ENCODE measurements at regions of chrX and their contacts with region 1.

Region 1: GRCh38 chrX:15854712-15855567 is at the start of gene AP1S2:
- DNase-seq: peak; percentile 88
- ATAC-seq: peak; percentile 90
- H3K4me3 Mint-ChIP-seq: peak within 1 kb of the TSS; percentile 91
- H3K27ac Mint-ChIP-seq: peak within 1 kb of the TSS; percentile 98
- H3K4me1 Mint-ChIP-seq: peaks cover 31% of the 10 kb centered on the region
- H3K27me3 Mint-ChIP-seq: no peaks in the 10 kb centered on the region
- CTCF ChIP-seq: no peak
- total RNA-seq, gene AP1S2: 42.3 and 45.9 TPM in 2 replicates

Region 2: DNA sequence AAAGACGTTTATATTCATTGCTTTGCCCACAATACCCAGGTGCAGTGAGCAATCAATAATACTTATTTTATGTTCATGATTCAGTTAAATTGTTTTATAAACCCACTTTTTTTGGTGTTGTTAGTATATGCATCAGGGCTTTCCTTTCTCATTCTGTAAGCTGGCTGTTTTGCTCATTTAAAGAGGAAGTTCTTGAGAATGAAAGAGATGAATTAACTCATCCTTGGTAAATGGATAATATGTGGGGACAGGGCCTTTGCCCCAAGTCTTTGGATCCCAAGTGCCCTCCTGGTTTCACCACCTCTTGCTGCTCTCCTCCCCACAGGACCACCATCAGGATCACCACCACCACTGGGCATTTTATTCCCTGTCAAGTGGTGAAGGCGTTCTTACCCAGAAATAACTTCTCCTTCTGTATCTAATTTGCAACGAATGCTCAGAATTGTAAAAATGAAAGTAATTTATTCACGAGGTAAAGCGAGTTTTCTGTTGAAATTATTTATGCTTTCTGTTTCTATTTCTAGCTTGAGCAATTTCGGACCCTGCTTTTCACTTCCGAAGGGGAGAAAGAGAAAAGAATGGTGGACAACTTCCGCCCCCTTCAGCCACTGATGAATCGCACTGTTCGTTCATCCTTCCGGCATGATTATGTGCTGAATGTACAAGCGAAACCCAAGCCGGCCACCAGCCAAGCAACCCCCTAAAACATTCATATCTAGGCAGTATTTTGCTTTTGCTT is 72.8 kb before region 1 on chrX:
- CTCF ChIA-PET with region 1: no interaction called
- POLR2A ChIA-PET with region 1: interaction called, 12 read pairs
- intact Hi-C with region 1: no loop called
- DNase-seq: no peak
- ATAC-seq: peak; percentile 81
- H3K4me3 Mint-ChIP-seq: peak overlapping the region; percentile 83
- H3K27ac Mint-ChIP-seq: peak overlapping the region; percentile 98
- H3K4me1 Mint-ChIP-seq: peaks cover 16% of the 10 kb centered on the region
- H3K27me3 Mint-ChIP-seq: no peaks in the 10 kb centered on the region
- CTCF ChIP-seq: no peak

Region 3: GRCh38 chrX:15815779-15816437 is 39.0 kb before region 1 on chrX:
- CTCF ChIA-PET with region 1: no interaction called
- POLR2A ChIA-PET with region 1: no interaction called
- intact Hi-C with region 1: no loop called
- DNase-seq: no peak
- ATAC-seq: peak; percentile 65
- H3K4me3 Mint-ChIP-seq: no peak overlapping the region
- H3K27ac Mint-ChIP-seq: no peak overlapping the region
- H3K4me1 Mint-ChIP-seq: no peaks in the 10 kb centered on the region
- H3K27me3 Mint-ChIP-seq: no peaks in the 10 kb centered on the region
- CTCF ChIP-seq: no peak

Region 4: DNA sequence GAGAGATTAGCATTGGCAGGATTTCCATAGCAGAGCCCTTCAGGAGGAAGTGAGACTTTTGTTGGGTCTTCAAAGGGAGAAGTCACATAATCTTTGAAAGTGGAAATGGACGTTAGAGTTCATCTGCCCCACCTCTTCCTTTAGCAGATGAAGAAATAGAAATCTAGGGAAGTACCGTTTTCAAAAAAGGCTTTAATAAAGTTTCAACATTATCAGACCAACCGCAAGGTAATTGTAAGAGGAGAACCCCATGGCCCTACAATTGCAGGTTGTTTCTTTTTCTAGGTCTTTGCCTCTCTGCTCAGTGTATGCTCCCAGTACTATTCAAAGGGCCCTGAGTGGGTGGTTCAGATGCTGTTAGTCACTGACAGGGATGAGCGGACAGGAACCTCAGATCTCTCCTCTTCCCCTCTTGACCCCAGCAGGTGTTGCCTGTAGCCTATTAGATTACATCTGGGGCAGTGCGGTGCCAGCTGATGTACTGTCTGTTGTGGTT is 48.3 kb after region 1 on chrX:
- CTCF ChIA-PET with region 1: no interaction called
- POLR2A ChIA-PET with region 1: interaction called, 36 read pairs
- intact Hi-C with region 1: loop called (anchors 1 kb)
- DNase-seq: peak; percentile 17
- ATAC-seq: peak; percentile 88
- H3K4me3 Mint-ChIP-seq: peak overlapping the region; percentile 57
- H3K27ac Mint-ChIP-seq: peak overlapping the region; percentile 88
- H3K4me1 Mint-ChIP-seq: peaks cover 26% of the 10 kb centered on the region
- H3K27me3 Mint-ChIP-seq: no peaks in the 10 kb centered on the region
- CTCF ChIP-seq: no peak

Region 5: DNA sequence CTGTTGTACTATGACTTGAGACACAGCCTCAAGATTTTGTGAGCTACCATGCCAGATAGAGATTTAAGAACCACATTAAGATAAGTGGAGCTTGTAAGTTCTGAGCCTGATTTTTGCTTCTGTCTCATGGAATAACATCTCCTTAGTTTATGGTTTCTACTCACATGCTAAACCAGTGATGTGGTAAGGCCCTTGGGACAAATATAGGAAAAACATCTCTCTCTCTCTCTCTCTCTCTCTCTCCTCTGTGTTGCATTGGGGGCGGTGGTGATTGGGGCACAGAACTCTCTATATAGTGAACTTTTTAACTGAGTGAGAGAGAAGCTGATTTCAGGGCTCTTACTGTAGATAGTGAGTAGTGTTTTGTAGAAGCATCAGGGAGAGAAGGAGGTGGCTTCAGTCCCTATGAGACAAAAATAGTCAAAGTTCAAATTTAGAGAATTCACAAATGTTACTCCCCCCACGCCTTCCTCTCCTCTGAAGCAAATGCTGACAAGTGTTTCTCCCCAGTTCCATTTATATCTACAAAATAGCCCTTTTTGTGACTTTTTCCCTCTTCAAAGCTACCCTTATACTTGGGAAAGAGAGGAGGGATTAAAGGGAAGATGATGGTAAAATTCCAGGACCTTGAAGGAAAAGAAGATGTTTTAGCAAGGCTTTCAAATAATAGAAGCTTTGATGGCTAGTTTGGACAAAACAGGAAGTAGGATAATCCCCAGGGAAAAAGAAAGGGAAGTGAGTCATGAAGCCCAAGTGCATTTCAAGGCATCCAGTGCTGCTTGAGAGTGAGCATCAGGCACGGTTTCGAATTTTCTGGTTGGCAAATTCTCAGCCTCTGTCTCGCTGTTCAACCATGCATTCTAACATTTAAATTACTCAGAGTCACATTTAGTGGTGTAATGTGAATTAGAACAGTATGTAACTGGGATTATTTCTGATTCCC is 134.0 kb after region 1 on chrX:
- CTCF ChIA-PET with region 1: no interaction called
- POLR2A ChIA-PET with region 1: interaction called, 4 read pairs
- intact Hi-C with region 1: loop called (anchors 1 kb)
- DNase-seq: no peak
- ATAC-seq: peak; percentile 89
- H3K4me3 Mint-ChIP-seq: peak overlapping the region; percentile 64
- H3K27ac Mint-ChIP-seq: peak overlapping the region; percentile 88
- H3K4me1 Mint-ChIP-seq: peaks cover 26% of the 10 kb centered on the region
- H3K27me3 Mint-ChIP-seq: no peaks in the 10 kb centered on the region
- CTCF ChIP-seq: no peak

Region 6: DNA sequence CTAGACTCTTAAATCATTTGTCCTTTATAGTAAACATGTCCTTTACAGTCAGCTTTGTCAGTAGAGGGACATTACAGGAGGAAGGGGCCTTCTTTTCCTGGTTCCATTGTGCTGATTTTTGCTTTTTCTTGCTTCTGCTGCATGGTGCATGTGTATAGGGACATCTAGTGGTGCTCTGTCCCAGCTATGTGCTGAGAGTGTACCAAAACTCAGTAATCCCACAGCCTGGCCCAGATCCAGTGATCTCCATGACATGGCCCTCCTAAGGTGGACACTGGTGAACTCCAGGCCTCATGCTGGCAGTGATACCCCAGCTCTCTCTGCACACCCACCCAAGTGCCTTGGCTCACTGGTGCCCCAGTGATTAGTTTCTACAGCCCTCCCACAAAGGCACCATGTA is 357.5 kb after region 1 on chrX:
- CTCF ChIA-PET with region 1: interaction called, 3 read pairs
- POLR2A ChIA-PET with region 1: no interaction called
- intact Hi-C with region 1: loop called (anchors 5 kb)
- DNase-seq: no peak
- ATAC-seq: no peak
- H3K4me3 Mint-ChIP-seq: no peak overlapping the region
- H3K27ac Mint-ChIP-seq: no peak overlapping the region
- H3K4me1 Mint-ChIP-seq: no peaks in the 10 kb centered on the region
- H3K27me3 Mint-ChIP-seq: no peaks in the 10 kb centered on the region
- CTCF ChIP-seq: no peak

Measured in activated B cell treated with CpG ODN at 0.5 μM for 24 hours (primary cell).